Activated T-helper 2 cell treated with anti-CD3 and anti-CD28 coated beads, Interferon-gamma antibody, Interleukin-2, Interleukin-4, amounts not matched to agents 10 μg/mL and 5 μg/mL and 100 μg/mL, durations not matched to agents 14 hours and 24 hours and 36 hours (primary cell): ENCODE measurements at regions of chr3 and their contacts with region 1.

Region 1: GRCh38 chr3:31936420-31937060 is 44.5 kb downstream of the OSBPL10 start:
- DNase-seq: no peak
- H3K4me3 Mint-ChIP-seq: no peak overlapping the region
- H3K27ac Mint-ChIP-seq: peak overlapping the region; percentile 44
- H3K4me1 Mint-ChIP-seq: peaks cover 10% of the 10 kb centered on the region
- H3K27me3 Mint-ChIP-seq: peaks cover 3% of the 10 kb centered on the region

Region 2: DNA sequence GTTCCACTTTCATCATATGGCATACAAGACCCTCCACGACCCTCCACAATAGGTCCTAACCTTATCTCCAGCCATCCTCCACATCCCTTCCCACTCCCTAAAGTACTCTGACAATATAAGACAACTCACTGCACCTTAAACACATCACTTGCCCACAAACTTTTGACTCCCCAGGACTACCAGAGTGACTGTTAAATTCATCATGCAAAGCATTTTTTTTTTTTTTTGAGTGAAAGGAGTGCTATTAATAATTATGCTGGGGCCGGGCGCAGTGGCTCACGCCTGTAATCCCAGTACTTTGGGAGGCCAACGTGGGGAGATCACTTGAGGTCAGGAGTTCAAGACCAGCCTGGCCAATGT is 11.3 kb before region 1 on chr3:
- intact Hi-C with region 1: loop called (anchors 1 kb)
- DNase-seq: no peak
- H3K4me3 Mint-ChIP-seq: no peak overlapping the region
- H3K27ac Mint-ChIP-seq: peak overlapping the region; percentile 65
- H3K4me1 Mint-ChIP-seq: peaks cover 38% of the 10 kb centered on the region
- H3K27me3 Mint-ChIP-seq: no peaks in the 10 kb centered on the region

Region 3: GRCh38 chr3:32347343-32348125 is 411.0 kb after region 1 on chr3:
- intact Hi-C with region 1: no loop called
- DNase-seq: no peak
- H3K4me3 Mint-ChIP-seq: no peak overlapping the region
- H3K27ac Mint-ChIP-seq: no peak overlapping the region
- H3K4me1 Mint-ChIP-seq: peaks cover 10% of the 10 kb centered on the region
- H3K27me3 Mint-ChIP-seq: no peaks in the 10 kb centered on the region